ENCODE measurements at regions of chr19 and their contacts with region 1.

Region 1: GRCh38 chr19:35740423-35741202 is 1.6 kb downstream of the IGFLR1 start:
- DNase-seq: peak; percentile 99
- ATAC-seq: peak; percentile 72
- H3K4me3 Mint-ChIP-seq: peak overlapping the region; percentile 87
- H3K27ac Mint-ChIP-seq: peak overlapping the region; percentile 96
- H3K4me1 Mint-ChIP-seq: peaks cover 24% of the 10 kb centered on the region
- H3K27me3 Mint-ChIP-seq: no peaks in the 10 kb centered on the region
- CTCF ChIP-seq: no peak

Region 2: DNA sequence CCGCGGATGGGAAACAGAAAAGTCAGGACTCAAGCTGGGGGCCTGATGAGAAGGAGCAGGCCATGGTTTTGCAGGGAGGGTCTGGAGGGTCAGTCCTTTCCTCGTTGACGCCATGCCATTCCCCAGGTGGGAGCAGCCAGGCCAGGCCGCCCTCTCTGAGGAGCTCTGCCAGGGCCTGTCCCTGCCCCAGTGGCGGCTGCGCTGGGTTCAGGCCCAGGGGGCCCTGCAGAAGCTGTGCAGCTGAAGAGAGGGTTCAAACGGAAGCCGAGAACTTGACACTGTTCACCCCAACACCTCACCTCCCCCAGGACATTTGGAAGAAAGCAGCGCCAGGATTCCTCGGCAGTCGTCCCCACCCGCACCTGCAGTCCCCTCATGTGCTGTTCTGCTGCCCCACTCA is 117.9 kb before region 1 on chr19:
- CTCF ChIA-PET with region 1: no interaction called
- POLR2A ChIA-PET with region 1: no interaction called
- intact Hi-C with region 1: no loop called
- DNase-seq: no peak
- ATAC-seq: no peak
- H3K4me3 Mint-ChIP-seq: no peak overlapping the region
- H3K27ac Mint-ChIP-seq: no peak overlapping the region
- H3K4me1 Mint-ChIP-seq: no peaks in the 10 kb centered on the region
- H3K27me3 Mint-ChIP-seq: no peaks in the 10 kb centered on the region
- CTCF ChIP-seq: no peak

Region 3: GRCh38 chr19:35693830-35694599 is 46.6 kb before region 1 on chr19:
- CTCF ChIA-PET with region 1: interaction called, 18 read pairs
- POLR2A ChIA-PET with region 1: interaction called, 6 read pairs
- intact Hi-C with region 1: loop called (anchors 5 kb)
- DNase-seq: peak; percentile 96
- ATAC-seq: peak; percentile 97
- H3K4me3 Mint-ChIP-seq: no peak overlapping the region
- H3K27ac Mint-ChIP-seq: peak overlapping the region; percentile 58
- H3K4me1 Mint-ChIP-seq: peaks cover 25% of the 10 kb centered on the region
- H3K27me3 Mint-ChIP-seq: no peaks in the 10 kb centered on the region
- CTCF ChIP-seq: peak; percentile 99

Region 4: DNA sequence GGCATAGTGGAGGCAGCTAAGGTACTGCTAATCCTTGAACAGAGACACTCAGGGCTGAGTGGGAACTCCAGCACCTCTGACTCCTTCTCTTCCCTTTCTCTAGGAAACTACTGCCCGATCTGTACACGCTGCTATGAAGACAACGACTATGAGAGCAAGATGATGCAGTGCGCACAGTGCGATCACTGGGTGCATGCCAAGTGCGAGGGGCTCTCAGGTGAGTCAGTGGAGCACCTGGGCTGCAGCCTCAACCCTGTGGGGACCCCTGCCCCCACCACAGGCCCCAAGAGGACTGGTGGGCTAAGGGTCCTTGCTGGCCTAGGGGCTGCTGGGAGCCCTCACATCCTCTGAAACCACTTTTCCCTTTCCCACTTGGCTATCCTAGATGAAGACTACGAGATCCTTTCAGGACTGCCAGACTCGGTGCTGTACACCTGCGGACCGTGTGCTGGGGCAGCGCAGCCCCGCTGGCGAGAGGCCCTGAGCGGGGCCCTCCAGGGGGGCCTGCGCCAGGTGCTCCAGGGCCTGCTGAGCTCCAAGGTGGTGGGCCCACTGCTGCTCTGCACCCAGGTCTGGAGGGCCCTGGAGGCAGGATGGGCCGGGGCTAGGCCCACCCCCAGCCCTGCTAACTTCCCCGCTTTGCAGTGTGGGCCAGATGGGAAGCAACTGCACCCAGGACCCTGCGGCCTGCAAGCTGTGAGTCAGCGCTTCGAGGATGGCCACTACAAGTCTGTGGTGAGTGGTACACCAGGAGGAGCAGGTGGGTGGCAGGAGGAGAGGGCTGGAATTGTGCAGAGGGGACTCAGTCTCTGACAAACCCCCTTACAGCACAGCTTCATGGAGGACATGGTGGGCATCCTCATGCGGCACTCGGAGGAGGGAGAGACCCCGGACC is 13.3 kb before region 1 on chr19:
- CTCF ChIA-PET with region 1: interaction called, 3 read pairs
- POLR2A ChIA-PET with region 1: interaction called, 105 read pairs
- intact Hi-C with region 1: no loop called
- DNase-seq: no peak
- ATAC-seq: no peak
- H3K4me3 Mint-ChIP-seq: no peak overlapping the region
- H3K27ac Mint-ChIP-seq: no peak overlapping the region
- H3K4me1 Mint-ChIP-seq: peaks cover 9% of the 10 kb centered on the region
- H3K27me3 Mint-ChIP-seq: no peaks in the 10 kb centered on the region
- CTCF ChIP-seq: no peak

Measured in activated CD8-positive, alpha-beta T cell treated with anti-CD3 and anti-CD28 coated beads for 36 hours (primary cell).